Activated T-helper 2 cell treated with anti-CD3 and anti-CD28 coated beads, Interferon-gamma antibody, Interleukin-2, Interleukin-4, amounts not matched to agents 10 μg/mL and 5 μg/mL and 100 μg/mL, durations not matched to agents 14 hours and 24 hours and 36 hours (primary cell): ENCODE measurements at regions of chr10 and their contacts with region 1.

Region 1: GRCh38 chr10:110007701-110008517 is at the start of gene ADD3:
- DNase-seq: peak; percentile 81
- H3K4me3 Mint-ChIP-seq: peak within 1 kb of the TSS; percentile 92
- H3K27ac Mint-ChIP-seq: peak within 1 kb of the TSS; percentile 89
- H3K4me1 Mint-ChIP-seq: peaks cover 41% of the 10 kb centered on the region
- H3K27me3 Mint-ChIP-seq: peaks cover 4% of the 10 kb centered on the region
- total RNA-seq, gene ADD3: 37.8 and 47.4 TPM in 2 replicates

Region 2: GRCh38 chr10:109922976-109923921 is 84.7 kb before region 1 on chr10 and contains the start of gene XPNPEP1:
- intact Hi-C with region 1: loop called (anchors 2 kb)
- DNase-seq: peak; percentile 75
- H3K4me3 Mint-ChIP-seq: peak within 1 kb of the TSS; percentile 91
- H3K27ac Mint-ChIP-seq: peak within 1 kb of the TSS; percentile 90
- H3K4me1 Mint-ChIP-seq: peaks cover 41% of the 10 kb centered on the region
- H3K27me3 Mint-ChIP-seq: peaks cover 7% of the 10 kb centered on the region
- total RNA-seq, gene XPNPEP1: 79.4 and 88.2 TPM in 2 replicates

Region 3: DNA sequence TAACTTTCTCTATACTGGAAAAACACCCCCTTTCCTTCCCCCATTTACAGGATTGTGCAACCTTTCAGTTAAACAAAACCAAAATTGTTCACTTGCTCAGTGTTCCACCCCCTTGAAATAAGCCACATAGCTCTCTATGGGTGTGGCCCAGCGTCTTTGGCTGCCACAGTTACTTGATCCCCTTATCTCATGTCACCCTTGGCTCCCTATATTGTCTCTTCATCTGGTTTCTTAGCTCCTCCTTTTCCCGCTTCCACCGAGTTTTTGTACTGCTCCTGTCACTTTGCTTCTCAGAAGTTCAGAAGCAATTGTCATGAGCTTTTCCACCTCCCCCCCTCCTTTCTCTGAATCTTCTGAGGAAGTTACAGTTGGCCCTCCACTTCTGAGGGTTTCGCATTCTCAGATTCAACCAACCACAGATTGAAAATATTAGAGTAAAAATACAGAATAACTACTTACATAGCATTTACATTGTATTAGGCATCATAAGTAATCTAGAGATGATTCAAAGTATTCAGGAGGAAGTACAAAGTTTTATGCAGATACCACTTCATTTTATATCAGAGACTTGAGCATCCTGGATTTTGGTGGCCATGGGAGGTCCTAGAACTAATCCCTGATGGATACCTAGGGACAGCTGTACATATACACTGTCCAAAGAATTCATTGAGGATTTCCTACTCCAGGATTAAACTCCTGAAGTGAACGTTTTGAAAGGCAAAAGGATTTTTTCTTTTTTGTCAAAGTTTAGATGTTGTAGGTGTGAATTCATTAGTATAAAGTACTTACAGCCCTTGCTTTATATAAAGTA is 60.3 kb after region 1 on chr10:
- intact Hi-C with region 1: loop called (anchors 1 kb)
- DNase-seq: peak; percentile 70
- H3K4me3 Mint-ChIP-seq: peak overlapping the region; percentile 76
- H3K27ac Mint-ChIP-seq: peak overlapping the region; percentile 95
- H3K4me1 Mint-ChIP-seq: peaks cover 69% of the 10 kb centered on the region
- H3K27me3 Mint-ChIP-seq: no peaks in the 10 kb centered on the region

Region 4: DNA sequence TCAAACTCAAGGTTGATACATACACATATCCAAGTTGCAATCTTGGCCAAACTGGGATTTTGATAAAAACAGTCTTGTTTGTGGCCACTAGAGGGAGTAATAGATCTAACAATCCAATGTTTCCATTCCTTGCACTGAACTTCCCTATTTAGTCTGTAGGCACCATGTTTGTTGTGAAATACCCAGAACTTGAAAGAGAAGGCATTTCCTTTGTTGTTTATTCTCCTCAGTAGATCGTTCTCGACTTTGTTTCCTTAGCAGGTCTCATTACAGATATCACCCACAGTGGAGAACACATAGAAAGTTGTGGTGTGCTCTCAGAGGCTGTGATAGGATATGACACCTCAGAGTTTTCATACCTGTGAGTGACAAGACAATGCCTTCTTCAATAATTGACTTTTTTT is 129.2 kb after region 1 on chr10:
- intact Hi-C with region 1: loop called (anchors 5 kb)
- DNase-seq: no peak
- H3K4me3 Mint-ChIP-seq: no peak overlapping the region
- H3K27ac Mint-ChIP-seq: no peak overlapping the region
- H3K4me1 Mint-ChIP-seq: peaks cover 31% of the 10 kb centered on the region
- H3K27me3 Mint-ChIP-seq: no peaks in the 10 kb centered on the region